Ascending aorta (tissue), 2 donors: ENCODE measurements at regions of chr15 and their contacts with region 1.

Region 1: GRCh38 chr15:37100109-37100965 is at the start of gene MEIS2:
- DNase-seq: peak; percentile 66 to 95
- H3K4me3 ChIP-seq: peak within 1 kb of the TSS; percentile 66 to 81
- H3K27ac ChIP-seq: peak within 1 kb of the TSS; percentile 94 to 96
- H3K4me1 ChIP-seq: peaks cover 0 to 3% of the 10 kb centered on the region in 2 donors
- H3K27me3 ChIP-seq: no peaks in the 10 kb centered on the region
- CTCF ChIP-seq: no peak
- total RNA-seq, gene MEIS2: 11.5 TPM

Region 2: GRCh38 chr15:35519541-35520149 is 1580.7 kb before region 1 on chr15:
- intact Hi-C with region 1: loop called (anchors 5 kb)
- DNase-seq: no peak
- H3K4me3 ChIP-seq: no peak overlapping the region
- H3K27ac ChIP-seq: peak overlapping the region in 1 of 2 donors; percentile 42
- H3K4me1 ChIP-seq: no peaks in the 10 kb centered on the region
- H3K27me3 ChIP-seq: no peaks in the 10 kb centered on the region
- CTCF ChIP-seq: peak; percentile 51 to 69 (median 59)

Region 3: GRCh38 chr15:35751413-35752133 is 1348.8 kb before region 1 on chr15:
- intact Hi-C with region 1: loop called (anchors 10 kb)
- DNase-seq: peak in 1 of 2 donors; percentile 78
- H3K4me3 ChIP-seq: no peak overlapping the region
- H3K27ac ChIP-seq: peak overlapping the region; percentile 15 to 46
- H3K4me1 ChIP-seq: peaks cover 0 to 21% of the 10 kb centered on the region in 2 donors
- H3K27me3 ChIP-seq: no peaks in the 10 kb centered on the region
- CTCF ChIP-seq: peak; percentile 53 to 81 (median 69)

Region 4: GRCh38 chr15:36579792-36580431 is 520.4 kb before region 1 on chr15:
- intact Hi-C with region 1: loop called (anchors 5 kb)
- DNase-seq: no peak
- H3K4me3 ChIP-seq: peak overlapping the region; percentile 74 to 76
- H3K27ac ChIP-seq: peak overlapping the region; percentile 72 to 85
- H3K4me1 ChIP-seq: peaks cover 0 to 3% of the 10 kb centered on the region in 2 donors
- H3K27me3 ChIP-seq: no peaks in the 10 kb centered on the region
- CTCF ChIP-seq: no peak

Region 5: DNA sequence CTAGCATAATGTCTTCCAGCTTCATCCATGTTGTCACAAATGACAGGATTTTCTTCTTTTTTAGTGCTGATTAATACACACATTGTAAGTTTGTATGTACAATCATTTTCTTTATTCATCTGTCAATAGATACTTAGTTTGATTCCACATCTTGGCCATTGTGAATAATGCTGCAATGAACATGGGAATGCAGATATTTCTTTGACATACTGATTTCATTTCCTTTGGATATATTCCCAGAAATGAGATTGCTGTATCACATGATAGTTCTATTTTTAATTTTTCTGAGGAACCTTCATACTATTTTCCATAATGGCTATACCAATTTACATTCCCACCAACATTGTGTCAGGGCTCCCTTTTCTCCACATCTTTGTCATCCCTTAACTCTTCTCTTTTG is 117.9 kb before region 1 on chr15:
- intact Hi-C with region 1: no loop called
- DNase-seq: no peak
- H3K4me3 ChIP-seq: no peak overlapping the region
- H3K27ac ChIP-seq: no peak overlapping the region
- H3K4me1 ChIP-seq: no peaks in the 10 kb centered on the region
- H3K27me3 ChIP-seq: no peaks in the 10 kb centered on the region
- CTCF ChIP-seq: no peak

Region 6: DNA sequence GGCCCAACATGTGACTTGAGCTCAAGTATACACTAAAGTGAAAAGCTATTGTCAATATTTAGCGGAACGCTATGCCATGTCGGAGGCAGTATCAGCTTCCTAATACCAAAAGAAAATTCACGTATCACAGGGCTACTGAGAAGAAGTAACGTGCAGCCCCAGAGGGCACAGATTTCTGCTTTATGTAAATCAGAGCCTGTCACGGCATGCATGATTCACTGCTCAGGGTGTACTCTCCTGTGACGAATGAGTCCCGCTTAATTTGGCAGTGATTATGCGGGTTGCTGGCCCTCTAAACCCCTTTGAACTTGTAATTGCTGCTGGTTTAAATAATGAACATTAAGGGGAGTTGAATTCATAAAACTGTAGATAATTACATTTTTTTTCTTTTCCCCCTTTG is 85.3 kb before region 1 on chr15:
- intact Hi-C with region 1: loop called (anchors 2 kb)
- DNase-seq: peak in 1 of 2 donors; percentile 71
- H3K4me3 ChIP-seq: peak overlapping the region in 1 of 2 donors; percentile 47
- H3K27ac ChIP-seq: peak overlapping the region; percentile 61 to 82
- H3K4me1 ChIP-seq: peaks cover 3 to 16% of the 10 kb centered on the region in 2 donors
- H3K27me3 ChIP-seq: no peaks in the 10 kb centered on the region
- CTCF ChIP-seq: no peak